Adrenal gland (tissue), 19 donors: ENCODE measurements at regions of chr3 and their contacts with region 1.

Region 1: GRCh38 chr3:151660885-151661284 is 72.8 kb upstream of the AADACL2 start:
- DNase-seq: no peak
- H3K4me3 ChIP-seq: no peak overlapping the region
- H3K27ac ChIP-seq: no peak overlapping the region
- H3K4me1 ChIP-seq: peaks cover 3 to 7% of the 10 kb centered on the region in 2 donors
- H3K27me3 ChIP-seq: no peaks in the 10 kb centered on the region
- CTCF ChIP-seq: peak; percentile 14 to 73 (median 47)
- POLR2A ChIP-seq: no peak

Region 2: DNA sequence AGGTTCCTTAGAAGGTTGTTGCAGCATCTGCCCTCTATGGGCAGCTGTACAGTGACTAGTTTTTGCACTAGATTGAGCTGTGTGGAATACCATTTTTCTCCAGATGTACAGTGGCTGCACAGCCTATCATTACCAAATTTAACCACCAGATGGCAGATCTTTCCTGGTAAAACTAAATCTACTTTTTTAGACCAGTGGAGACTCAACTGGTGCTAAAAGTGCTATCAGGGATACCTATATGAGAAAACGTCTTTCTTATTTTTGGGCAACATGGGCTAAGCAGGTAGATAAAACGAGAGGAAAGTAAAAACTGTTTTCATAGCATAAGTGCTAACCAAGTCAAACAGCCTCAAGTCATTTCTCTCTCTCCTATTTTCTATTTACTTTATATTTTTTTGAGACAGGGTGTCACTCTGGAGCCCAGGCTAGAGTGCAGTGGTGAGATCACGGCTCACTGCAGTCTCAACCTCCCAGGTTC is 221.2 kb before region 1 on chr3:
- intact Hi-C with region 1: loop called (anchors 5 to 10 kb)
- DNase-seq: peak in 5 of 7 donors; percentile 33 to 55 (median 45)
- H3K4me3 ChIP-seq: no peak overlapping the region
- H3K27ac ChIP-seq: no peak overlapping the region
- H3K4me1 ChIP-seq: peaks cover under 1% of the 10 kb centered on the region in 2 donors
- H3K27me3 ChIP-seq: no peaks in the 10 kb centered on the region
- CTCF ChIP-seq: peak; percentile 80 to 93 (median 86)
- POLR2A ChIP-seq: no peak

Region 3: GRCh38 chr3:151593928-151594327 is 67.0 kb before region 1 on chr3:
- intact Hi-C with region 1: no loop called
- DNase-seq: no peak
- H3K4me3 ChIP-seq: no peak overlapping the region
- H3K27ac ChIP-seq: no peak overlapping the region
- H3K4me1 ChIP-seq: no peaks in the 10 kb centered on the region
- H3K27me3 ChIP-seq: no peaks in the 10 kb centered on the region
- CTCF ChIP-seq: no peak
- POLR2A ChIP-seq: no peak

Region 4: GRCh38 chr3:151639418-151639740 is 21.5 kb before region 1 on chr3:
- intact Hi-C with region 1: no loop called
- DNase-seq: peak in 3 of 7 donors; percentile 2 to 23 (median 13)
- H3K4me3 ChIP-seq: no peak overlapping the region
- H3K27ac ChIP-seq: peak overlapping the region in 2 of 5 donors; percentile 48 to 65
- H3K4me1 ChIP-seq: peaks cover 4 to 8% of the 10 kb centered on the region in 2 donors
- H3K27me3 ChIP-seq: no peaks in the 10 kb centered on the region
- CTCF ChIP-seq: no peak
- POLR2A ChIP-seq: no peak

Region 5: GRCh38 chr3:151838583-151839312 is 177.9 kb after region 1 on chr3:
- intact Hi-C with region 1: loop called in 1 of 2 experiments (anchors 10 kb)
- DNase-seq: peak; percentile 57 to 80 (median 70)
- H3K4me3 ChIP-seq: peak overlapping the region in 1 of 4 donors; percentile 46
- H3K27ac ChIP-seq: no peak overlapping the region
- H3K4me1 ChIP-seq: peaks cover 9 to 18% of the 10 kb centered on the region in 2 donors
- H3K27me3 ChIP-seq: no peaks in the 10 kb centered on the region
- CTCF ChIP-seq: peak; percentile 58 to 91 (median 88)
- POLR2A ChIP-seq: no peak

Region 6: GRCh38 chr3:151918253-151919029 is 257.6 kb after region 1 on chr3:
- intact Hi-C with region 1: loop called in 1 of 2 experiments (anchors 10 kb)
- DNase-seq: no peak
- H3K4me3 ChIP-seq: no peak overlapping the region
- H3K27ac ChIP-seq: no peak overlapping the region
- H3K4me1 ChIP-seq: peaks cover 0 to 6% of the 10 kb centered on the region in 2 donors
- H3K27me3 ChIP-seq: no peaks in the 10 kb centered on the region
- CTCF ChIP-seq: peak; percentile 45 to 82 (median 76)
- POLR2A ChIP-seq: no peak